K562 (cell line): ENCODE measurements at regions of chr11 and their contacts with region 1.

Region 1: DNA sequence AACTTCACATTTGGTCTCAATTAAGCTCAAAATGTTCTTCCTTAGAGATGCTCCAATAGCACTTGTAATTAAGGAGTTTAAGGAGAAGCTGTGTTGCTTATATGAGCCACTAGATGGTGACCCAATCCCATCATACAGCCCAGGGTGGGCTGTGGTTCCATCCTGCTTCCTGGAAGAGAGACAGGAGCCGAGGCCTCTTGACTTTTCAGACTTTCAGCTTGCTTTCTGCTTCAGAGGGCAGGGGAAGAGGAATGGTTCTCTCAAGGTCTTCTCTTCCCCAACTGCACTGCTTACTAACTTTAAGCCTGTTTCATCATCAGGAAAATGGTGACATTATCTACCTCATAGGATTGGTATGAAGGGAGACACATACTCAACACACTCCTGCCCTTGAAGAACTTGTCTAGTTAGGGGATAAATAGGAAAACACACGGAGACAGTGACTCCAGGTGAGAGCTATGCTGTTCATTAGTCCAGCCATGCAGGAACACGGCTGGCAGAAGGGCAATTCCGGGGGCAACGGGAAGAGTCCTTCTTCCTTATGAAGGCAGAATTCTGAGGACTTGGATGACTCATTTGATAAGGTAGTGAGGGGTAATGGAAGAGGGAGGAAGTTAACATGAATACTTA is 20.1 kb downstream of the TMEM218 start:
- DNase-seq: peak; percentile 71 to 75 (median 72)
- ATAC-seq: peak; percentile 95
- H3K4me3 ChIP-seq: no peak overlapping the region
- H3K27ac ChIP-seq: no peak overlapping the region
- H3K4me1 ChIP-seq: peaks cover 0 to 7% of the 10 kb centered on the region in 2 experiments; a peak in 2 of 5 replicates
- H3K27me3 ChIP-seq: no peaks in the 10 kb centered on the region
- CTCF ChIP-seq: peak; percentile 65 to 81 (median 78)
- EP300 ChIP-seq: no peak
- POLR2A ChIP-seq: no peak
- RAD21 ChIP-seq: peak; percentile 71 to 84

Region 2: GRCh38 chr11:125025968-125026367 is 65.4 kb before region 1 on chr11:
- CTCF ChIA-PET with region 1: no interaction called
- POLR2A ChIA-PET with region 1: no interaction called
- in situ Hi-C with region 1: no loop called
- intact Hi-C with region 1: no loop called
- DNase-seq: no peak
- ATAC-seq: no peak
- H3K4me3 ChIP-seq: no peak overlapping the region
- H3K27ac ChIP-seq: no peak overlapping the region
- H3K4me1 ChIP-seq: no peaks in the 10 kb centered on the region
- H3K27me3 ChIP-seq: no peaks in the 10 kb centered on the region
- CTCF ChIP-seq: no peak
- EP300 ChIP-seq: no peak
- POLR2A ChIP-seq: no peak
- RAD21 ChIP-seq: no peak

Region 3: GRCh38 chr11:125141686-125142535 is 50.5 kb after region 1 on chr11:
- CTCF ChIA-PET with region 1: interaction called, 8 read pairs
- POLR2A ChIA-PET with region 1: no interaction called
- in situ Hi-C with region 1: no loop called
- intact Hi-C with region 1: loop called (anchors 1 kb)
- DNase-seq: peak; percentile 56 to 87 (median 78)
- ATAC-seq: peak; percentile 97
- H3K4me3 ChIP-seq: no peak overlapping the region
- H3K27ac ChIP-seq: no peak overlapping the region
- H3K4me1 ChIP-seq: peaks cover 0 to 7% of the 10 kb centered on the region in 2 experiments; a peak in 2 of 5 replicates
- H3K27me3 ChIP-seq: peaks cover 43 to 58% of the 10 kb centered on the region in 2 experiments; a peak in 4 of 5 replicates
- CTCF ChIP-seq: peak; percentile 81 to 91 (median 85)
- EP300 ChIP-seq: no peak
- POLR2A ChIP-seq: no peak
- RAD21 ChIP-seq: peak; percentile 81 to 87

Region 4: GRCh38 chr11:125275905-125276618 is 184.7 kb after region 1 on chr11:
- CTCF ChIA-PET with region 1: no interaction called
- POLR2A ChIA-PET with region 1: no interaction called
- in situ Hi-C with region 1: no loop called
- intact Hi-C with region 1: no loop called
- DNase-seq: no peak
- ATAC-seq: no peak
- H3K4me3 ChIP-seq: no peak overlapping the region
- H3K27ac ChIP-seq: no peak overlapping the region
- H3K4me1 ChIP-seq: peaks cover 9 to 15% of the 10 kb centered on the region in 2 experiments; a peak in 3 of 5 replicates
- H3K27me3 ChIP-seq: peaks cover 13 to 65% of the 10 kb centered on the region in 2 experiments
- CTCF ChIP-seq: no peak
- EP300 ChIP-seq: no peak
- POLR2A ChIP-seq: no peak
- RAD21 ChIP-seq: no peak